GM12878 (cell line): ENCODE measurements at regions of chr10 and their contacts with region 1.

Region 1: DNA sequence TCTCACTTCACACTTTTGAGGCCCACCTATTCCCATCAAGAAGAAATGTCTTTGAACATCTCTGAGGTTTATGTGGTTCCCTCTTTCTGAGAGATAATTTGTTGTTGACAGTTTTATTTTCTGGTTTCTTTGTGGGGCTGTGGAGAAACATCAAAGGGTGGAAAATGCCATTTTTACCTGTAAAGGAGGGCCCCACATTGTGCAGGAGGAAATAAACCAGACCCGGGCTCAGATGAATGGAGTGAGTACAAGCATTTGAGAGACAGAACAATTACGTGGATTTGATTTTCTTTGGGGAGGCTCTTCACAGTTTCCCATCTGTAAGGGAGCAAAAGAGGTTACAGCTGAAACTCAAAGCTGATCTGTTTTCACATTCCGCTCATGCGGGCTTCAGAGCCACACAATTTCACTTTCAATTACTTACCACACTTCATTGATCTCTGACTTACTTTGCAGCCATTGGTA is 29.8 kb downstream of the ITPRIP start:
- DNase-seq: peak; percentile 56
- ATAC-seq: peak; percentile 83
- H3K4me3 ChIP-seq: peak overlapping the region; percentile 36; the same call in 1 of the 2 replicates
- H3K27ac ChIP-seq: peak overlapping the region; percentile 13; the same call in 1 of the 2 replicates
- H3K4me1 ChIP-seq: peaks cover 26% of the 10 kb centered on the region
- H3K27me3 ChIP-seq: no peaks in the 10 kb centered on the region
- CTCF ChIP-seq: no peak
- EP300 ChIP-seq: no peak
- POLR2A ChIP-seq: no peak
- RAD21 ChIP-seq: no peak

Region 2: GRCh38 chr10:104274762-104275721 is 33.4 kb before region 1 on chr10:
- CTCF ChIA-PET with region 1: interaction called, 27 read pairs
- POLR2A ChIA-PET with region 1: no interaction called
- RAD21 ChIA-PET with region 1: no interaction called
- SMC1A ChIA-PET with region 1: interaction called, 3 read pairs
- in situ Hi-C with region 1: no loop called
- intact Hi-C with region 1: no loop called
- DNase-seq: no peak
- ATAC-seq: peak; percentile 97
- H3K4me3 ChIP-seq: no peak overlapping the region
- H3K27ac ChIP-seq: no peak overlapping the region
- H3K4me1 ChIP-seq: no peaks in the 10 kb centered on the region
- H3K27me3 ChIP-seq: peaks cover 2% of the 10 kb centered on the region in 2 experiments; a peak in 3 of 4 replicates
- CTCF ChIP-seq: peak; percentile 69 to 97 (median 86)
- EP300 ChIP-seq: no peak
- POLR2A ChIP-seq: no peak
- RAD21 ChIP-seq: peak; percentile 36; the same call in 1 of the 2 replicates

Region 3: DNA sequence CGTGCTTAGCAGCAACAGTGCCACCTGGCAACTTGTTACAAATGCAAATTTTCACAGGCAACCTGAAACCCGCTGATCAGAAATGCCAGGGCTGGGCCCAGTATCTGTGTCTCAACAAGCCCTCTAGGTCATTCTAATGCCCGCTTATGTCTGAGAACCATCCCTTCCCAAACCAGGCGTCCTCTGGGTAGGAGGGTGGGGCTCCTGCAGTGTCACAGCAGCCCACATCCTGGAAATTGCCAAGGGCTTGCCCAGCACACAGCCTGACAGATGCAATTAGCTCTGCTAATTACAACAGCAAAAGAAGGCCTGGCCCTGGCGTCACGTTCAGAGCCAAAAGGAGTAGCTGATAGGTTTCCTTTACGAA is 13.9 kb after region 1 on chr10:
- CTCF ChIA-PET with region 1: interaction called, 23 read pairs
- POLR2A ChIA-PET with region 1: interaction called, 3 read pairs
- RAD21 ChIA-PET with region 1: interaction called, 5 read pairs
- SMC1A ChIA-PET with region 1: interaction called, 13 read pairs
- in situ Hi-C with region 1: no loop called
- intact Hi-C with region 1: no loop called
- DNase-seq: no peak
- ATAC-seq: peak; percentile 66
- H3K4me3 ChIP-seq: no peak overlapping the region; the same call in 1 of the 2 replicates
- H3K27ac ChIP-seq: no peak overlapping the region; the same call in 1 of the 2 replicates
- H3K4me1 ChIP-seq: peaks cover 30% of the 10 kb centered on the region
- H3K27me3 ChIP-seq: no peaks in the 10 kb centered on the region
- CTCF ChIP-seq: no peak
- EP300 ChIP-seq: no peak
- POLR2A ChIP-seq: no peak
- RAD21 ChIP-seq: no peak

Region 4: DNA sequence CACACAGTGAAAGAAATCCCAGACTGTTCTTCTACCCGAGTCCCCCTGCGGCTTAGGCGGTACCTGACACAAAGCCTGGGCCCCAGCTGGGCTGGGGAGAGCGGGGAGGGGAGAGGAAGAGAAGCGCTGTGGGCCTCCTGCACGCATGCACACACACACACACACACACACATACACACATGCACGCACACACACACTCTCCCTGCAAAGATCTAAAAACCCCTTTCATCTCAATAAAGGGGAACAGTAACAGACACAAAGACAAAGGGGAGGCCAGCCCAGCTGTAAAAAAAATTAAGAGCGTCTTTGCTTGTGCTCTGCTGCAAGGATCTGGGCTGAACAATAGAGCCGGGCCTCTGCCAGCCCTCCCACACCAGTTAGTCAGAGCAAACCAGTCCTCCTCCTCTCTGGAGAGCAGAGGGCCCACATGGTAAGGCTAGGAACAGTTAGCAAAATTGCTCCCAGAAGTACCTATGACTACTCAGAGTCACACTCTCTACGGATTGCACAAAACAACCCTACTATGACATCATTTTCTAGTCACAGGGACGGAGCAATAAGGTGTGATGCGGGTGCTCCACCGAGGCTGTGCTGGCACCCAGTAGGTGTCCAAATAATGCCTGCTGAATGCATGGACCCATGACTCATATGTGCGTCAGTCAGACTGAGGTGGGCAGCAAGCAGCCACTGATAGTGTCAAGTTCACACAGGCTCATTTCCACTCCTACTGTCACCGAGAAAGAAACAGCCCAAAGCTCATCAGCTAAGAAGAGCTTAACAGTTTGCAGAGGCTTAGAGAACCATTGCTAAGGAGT is 20.6 kb after region 1 on chr10:
- CTCF ChIA-PET with region 1: interaction called, 19 read pairs
- POLR2A ChIA-PET with region 1: interaction called, 3 read pairs
- RAD21 ChIA-PET with region 1: interaction called, 39 read pairs
- SMC1A ChIA-PET with region 1: interaction called, 58 read pairs
- in situ Hi-C with region 1: no loop called
- intact Hi-C with region 1: no loop called
- DNase-seq: no peak
- ATAC-seq: peak; percentile 77
- H3K4me3 ChIP-seq: peak overlapping the region; percentile 59
- H3K27ac ChIP-seq: 0 out of 2 replicates have a peak overlapping the region, but pooled peaks have one; percentile 2
- H3K4me1 ChIP-seq: peaks cover 26% of the 10 kb centered on the region
- H3K27me3 ChIP-seq: no peaks in the 10 kb centered on the region
- CTCF ChIP-seq: no peak
- EP300 ChIP-seq: 0 out of 4 replicates have a peak, but pooled peaks of 1 of the 2 experiments have one; percentile 32
- POLR2A ChIP-seq: no peak
- RAD21 ChIP-seq: no peak

Region 5: DNA sequence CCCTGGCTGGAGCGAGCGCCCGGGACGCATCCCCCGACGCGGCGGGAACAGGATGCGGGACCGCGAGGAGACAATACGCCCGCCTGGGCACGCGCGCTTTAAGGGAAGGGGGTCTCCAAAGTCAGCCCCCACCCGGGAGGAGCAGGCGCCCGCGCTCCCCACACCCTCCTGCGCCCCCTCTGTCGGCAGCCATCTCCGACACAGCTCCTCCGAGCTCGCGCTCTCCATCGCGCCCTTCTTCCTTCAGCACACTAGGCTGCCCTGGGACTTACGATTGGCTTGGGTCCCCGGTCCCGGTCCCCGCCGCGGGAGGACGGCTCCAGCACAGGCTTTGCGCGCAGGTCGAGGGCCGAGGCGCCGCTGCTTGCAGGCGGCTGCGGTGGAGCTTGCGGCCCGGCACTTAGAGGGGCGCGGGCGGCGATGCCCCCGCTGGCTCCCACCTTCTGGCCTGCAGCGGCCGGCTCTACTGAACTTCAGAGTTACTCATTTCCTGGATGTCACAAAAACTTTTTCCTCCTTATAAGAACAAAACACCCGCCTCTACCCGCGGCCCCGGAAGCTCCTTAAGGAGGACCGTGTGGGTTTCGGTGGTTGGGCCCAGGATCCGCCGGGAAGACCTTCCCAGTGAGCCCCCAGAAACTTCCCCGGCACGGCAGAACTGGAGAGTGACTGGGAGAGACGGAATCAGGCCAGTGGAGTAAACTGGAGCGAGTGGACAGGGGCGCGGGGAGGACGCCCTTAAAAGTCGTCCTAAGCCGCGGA is 29.7 kb after region 1 on chr10 and contains the start of gene ITPRIP:
- CTCF ChIA-PET with region 1: interaction called, 54 read pairs
- POLR2A ChIA-PET with region 1: interaction called, 5 read pairs
- RAD21 ChIA-PET with region 1: interaction called, 39 read pairs
- SMC1A ChIA-PET with region 1: interaction called, 58 read pairs
- in situ Hi-C with region 1: no loop called
- intact Hi-C with region 1: loop called (anchors 2 kb)
- DNase-seq: no peak
- ATAC-seq: peak; percentile 79
- H3K4me3 ChIP-seq: peak within 1 kb of the TSS; percentile 94
- H3K27ac ChIP-seq: peak within 1 kb of the TSS; percentile 96
- H3K4me1 ChIP-seq: peaks cover 20% of the 10 kb centered on the region
- H3K27me3 ChIP-seq: no peaks in the 10 kb centered on the region
- CTCF ChIP-seq: peak; percentile 15 to 26 (median 18); a peak in 4 of 6 replicates
- EP300 ChIP-seq: 0 out of 4 replicates have a peak, but pooled peaks of 1 of the 2 experiments have one; percentile 14
- POLR2A ChIP-seq: peak; percentile 91
- RAD21 ChIP-seq: no peak
- polyA plus RNA-seq, gene ITPRIP: 0.82 to 1.2 TPM

Region 6: DNA sequence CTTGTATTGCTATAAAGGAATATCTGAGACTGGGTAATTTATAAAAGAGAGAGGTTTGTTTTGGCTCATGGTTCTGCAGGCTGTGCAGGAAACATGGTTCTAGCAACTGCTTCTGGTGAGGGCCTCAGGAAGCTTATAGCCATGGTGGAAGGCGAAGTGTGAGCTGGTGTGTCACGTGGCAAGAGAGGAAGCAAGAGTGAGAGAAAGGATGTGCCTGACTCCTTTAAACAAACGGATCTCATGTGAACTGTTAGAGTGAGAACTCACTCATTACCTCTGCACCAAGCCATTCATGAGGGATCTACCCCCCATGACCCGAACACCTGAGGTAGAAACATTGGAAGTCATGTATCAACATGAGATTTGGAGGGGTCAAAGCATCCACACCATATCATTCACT is 37.5 kb after region 1 on chr10:
- CTCF ChIA-PET with region 1: interaction called, 419 read pairs
- POLR2A ChIA-PET with region 1: interaction called, 10 read pairs
- RAD21 ChIA-PET with region 1: interaction called, 137 read pairs
- SMC1A ChIA-PET with region 1: interaction called, 187 read pairs
- in situ Hi-C with region 1: loop called (anchors 5 kb)
- intact Hi-C with region 1: loop called (anchors 1 kb)
- DNase-seq: no peak
- ATAC-seq: no peak
- H3K4me3 ChIP-seq: no peak overlapping the region
- H3K27ac ChIP-seq: no peak overlapping the region
- H3K4me1 ChIP-seq: peaks cover 30% of the 10 kb centered on the region
- H3K27me3 ChIP-seq: no peaks in the 10 kb centered on the region
- CTCF ChIP-seq: no peak
- EP300 ChIP-seq: no peak
- POLR2A ChIP-seq: no peak
- RAD21 ChIP-seq: no peak

Region 7: GRCh38 chr10:104548090-104548489 is 239.6 kb after region 1 on chr10:
- CTCF ChIA-PET with region 1: no interaction called
- POLR2A ChIA-PET with region 1: no interaction called
- RAD21 ChIA-PET with region 1: no interaction called
- SMC1A ChIA-PET with region 1: no interaction called
- in situ Hi-C with region 1: no loop called
- intact Hi-C with region 1: no loop called
- DNase-seq: no peak
- ATAC-seq: no peak
- H3K4me3 ChIP-seq: no peak overlapping the region
- H3K27ac ChIP-seq: no peak overlapping the region
- H3K4me1 ChIP-seq: no peaks in the 10 kb centered on the region
- H3K27me3 ChIP-seq: no peaks in the 10 kb centered on the region; a peak in 1 of 4 replicates
- CTCF ChIP-seq: no peak
- EP300 ChIP-seq: no peak
- POLR2A ChIP-seq: no peak
- RAD21 ChIP-seq: no peak